PC-3 (cell line): ENCODE measurements at regions of chr4 and their contacts with region 1.

Region 1: GRCh38 chr4:113394730-113395530 is 345.5 kb downstream of the ANK2 start:
- DNase-seq: peak; percentile 92
- ATAC-seq: peak; percentile 89
- H3K4me3 ChIP-seq: no peak overlapping the region; the same call in 1 of the 2 replicates
- H3K27ac ChIP-seq: peak overlapping the region; percentile 49
- H3K4me1 ChIP-seq: peaks cover 15% of the 10 kb centered on the region
- H3K27me3 ChIP-seq: no peaks in the 10 kb centered on the region
- CTCF ChIP-seq: peak; percentile 82

Region 2: GRCh38 chr4:113106108-113106507 is 288.8 kb before region 1 on chr4:
- CTCF ChIA-PET with region 1: no interaction called
- POLR2A ChIA-PET with region 1: no interaction called
- intact Hi-C with region 1: loop called (anchors 5 kb)
- DNase-seq: peak; percentile 57
- ATAC-seq: no peak; the same call in 1 of the 2 replicates
- H3K4me3 ChIP-seq: no peak overlapping the region
- H3K27ac ChIP-seq: no peak overlapping the region
- H3K4me1 ChIP-seq: peaks cover 5% of the 10 kb centered on the region; the same call in 1 of the 2 replicates
- H3K27me3 ChIP-seq: no peaks in the 10 kb centered on the region
- CTCF ChIP-seq: peak; percentile 61

Region 3: GRCh38 chr4:113256946-113257345 is 138.0 kb before region 1 on chr4:
- CTCF ChIA-PET with region 1: no interaction called
- POLR2A ChIA-PET with region 1: no interaction called
- intact Hi-C with region 1: no loop called
- DNase-seq: no peak
- ATAC-seq: no peak
- H3K4me3 ChIP-seq: no peak overlapping the region
- H3K27ac ChIP-seq: no peak overlapping the region
- H3K4me1 ChIP-seq: no peaks in the 10 kb centered on the region
- H3K27me3 ChIP-seq: no peaks in the 10 kb centered on the region
- CTCF ChIP-seq: no peak

Region 4: GRCh38 chr4:113339430-113339813 is 55.5 kb before region 1 on chr4:
- CTCF ChIA-PET with region 1: no interaction called
- POLR2A ChIA-PET with region 1: no interaction called
- intact Hi-C with region 1: no loop called
- DNase-seq: no peak
- ATAC-seq: no peak
- H3K4me3 ChIP-seq: no peak overlapping the region
- H3K27ac ChIP-seq: no peak overlapping the region
- H3K4me1 ChIP-seq: peaks cover 9% of the 10 kb centered on the region
- H3K27me3 ChIP-seq: no peaks in the 10 kb centered on the region
- CTCF ChIP-seq: no peak

Region 5: DNA sequence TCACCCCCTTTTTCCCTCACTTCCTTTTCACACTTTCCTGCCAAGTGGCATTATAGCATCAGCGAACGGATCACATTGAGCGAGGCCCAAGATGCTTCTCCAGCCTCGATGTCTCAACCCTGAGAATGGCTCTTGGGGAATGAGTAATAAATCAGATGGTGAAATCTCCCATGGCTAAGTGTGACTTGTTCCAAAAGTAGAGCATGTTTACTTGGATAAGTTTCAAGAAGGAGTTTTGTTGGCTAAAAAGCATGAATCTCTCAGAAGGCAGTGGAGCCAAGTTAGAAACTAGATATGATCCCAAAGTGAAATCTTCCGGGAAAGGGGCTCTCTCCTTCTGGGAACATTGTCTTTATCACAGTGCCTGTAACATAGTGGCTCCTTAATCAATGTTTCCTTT is 50.4 kb after region 1 on chr4:
- CTCF ChIA-PET with region 1: no interaction called
- POLR2A ChIA-PET with region 1: no interaction called
- intact Hi-C with region 1: loop called (anchors 10 kb)
- DNase-seq: peak; percentile 82
- ATAC-seq: peak; percentile 49
- H3K4me3 ChIP-seq: peak overlapping the region; percentile 40; the same call in 1 of the 2 replicates
- H3K27ac ChIP-seq: peak overlapping the region; percentile 100
- H3K4me1 ChIP-seq: peaks cover 30% of the 10 kb centered on the region
- H3K27me3 ChIP-seq: no peaks in the 10 kb centered on the region
- CTCF ChIP-seq: no peak

Region 6: DNA sequence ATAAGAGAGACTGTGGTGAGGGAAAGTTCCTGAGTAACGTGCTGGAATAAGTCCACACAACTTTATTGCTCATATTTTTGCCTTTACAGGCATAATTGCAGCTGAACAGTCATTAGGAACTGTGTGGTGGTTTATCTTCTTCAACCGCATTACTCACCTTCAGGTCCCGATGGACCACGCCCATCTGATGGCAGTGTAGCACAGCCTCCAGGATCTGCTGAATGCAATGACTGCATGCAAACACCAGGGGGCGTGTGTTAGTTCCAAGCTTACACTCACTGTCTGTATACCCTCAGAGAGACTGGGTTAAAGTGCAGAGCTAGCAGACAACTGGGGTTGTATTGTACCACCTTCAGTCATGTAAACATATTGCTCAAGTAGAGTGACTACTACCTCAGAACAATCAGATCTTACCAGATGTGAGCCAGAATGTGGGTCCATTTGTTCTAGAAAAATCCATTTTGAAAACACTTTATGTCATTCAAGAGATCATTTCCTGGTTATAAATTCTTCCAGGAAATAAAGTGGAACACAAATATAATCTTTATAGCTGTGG is 152.6 kb after region 1 on chr4:
- CTCF ChIA-PET with region 1: no interaction called
- POLR2A ChIA-PET with region 1: no interaction called
- intact Hi-C with region 1: loop called (anchors 2 kb)
- DNase-seq: peak; percentile 96
- ATAC-seq: peak; percentile 97
- H3K4me3 ChIP-seq: no peak overlapping the region
- H3K27ac ChIP-seq: peak overlapping the region; percentile 31; the same call in 1 of the 2 replicates
- H3K4me1 ChIP-seq: peaks cover 13% of the 10 kb centered on the region
- H3K27me3 ChIP-seq: no peaks in the 10 kb centered on the region
- CTCF ChIP-seq: peak; percentile 91

Region 7: GRCh38 chr4:113908829-113909228 is 513.9 kb after region 1 on chr4:
- CTCF ChIA-PET with region 1: no interaction called
- POLR2A ChIA-PET with region 1: no interaction called
- intact Hi-C with region 1: loop called (anchors 5 kb)
- DNase-seq: peak; percentile 6
- ATAC-seq: no peak; the same call in 1 of the 2 replicates
- H3K4me3 ChIP-seq: no peak overlapping the region
- H3K27ac ChIP-seq: no peak overlapping the region
- H3K4me1 ChIP-seq: no peaks in the 10 kb centered on the region
- H3K27me3 ChIP-seq: no peaks in the 10 kb centered on the region
- CTCF ChIP-seq: peak; percentile 49; the same call in 1 of the 2 replicates